Esophagus squamous epithelium (tissue), 5 donors: ENCODE measurements at regions of chr15 and their contacts with region 1.

Region 1: GRCh38 chr15:40857601-40858341 is 13.9 kb downstream of the SPINT1 start:
- DNase-seq: no peak
- H3K4me3 ChIP-seq: no peak overlapping the region
- H3K27ac ChIP-seq: peak overlapping the region; percentile 75 to 86 (median 80)
- H3K4me1 ChIP-seq: peaks cover 22 to 71% (median 24%) of the 10 kb centered on the region in 3 donors
- H3K27me3 ChIP-seq: peaks cover 0 to 10% (median 0%) of the 10 kb centered on the region in 4 donors
- CTCF ChIP-seq: peak; percentile 87 to 99 (median 98)
- POLR2A ChIP-seq: no peak

Region 2: DNA sequence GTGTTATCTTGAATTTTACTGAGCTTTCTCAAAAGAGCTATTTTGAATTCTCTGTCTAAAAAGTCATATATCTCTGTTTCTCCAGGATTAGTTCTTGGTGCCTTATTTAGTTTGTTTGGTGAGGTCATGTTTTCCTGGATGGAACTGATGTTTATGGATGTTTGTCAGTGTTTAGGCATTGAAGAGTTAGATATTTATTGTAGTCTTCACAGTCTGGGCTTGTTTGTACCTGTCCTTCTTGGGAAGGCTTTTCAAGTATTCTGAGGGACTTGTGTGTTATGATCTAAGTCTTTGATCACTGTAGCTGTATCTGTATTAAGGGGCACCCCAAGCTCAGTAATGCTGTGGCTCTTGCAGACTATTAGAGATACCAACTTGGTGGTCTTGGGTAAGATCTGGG is 173.4 kb before region 1 on chr15:
- intact Hi-C with region 1: no loop called
- DNase-seq: no peak
- H3K4me3 ChIP-seq: no peak overlapping the region
- H3K27ac ChIP-seq: no peak overlapping the region
- H3K4me1 ChIP-seq: peaks cover 0 to 6% (median 0%) of the 10 kb centered on the region in 3 donors
- H3K27me3 ChIP-seq: no peaks in the 10 kb centered on the region
- CTCF ChIP-seq: no peak
- POLR2A ChIP-seq: no peak

Region 3: GRCh38 chr15:40731034-40731433 is 126.7 kb before region 1 on chr15:
- intact Hi-C with region 1: no loop called
- DNase-seq: no peak
- H3K4me3 ChIP-seq: no peak overlapping the region
- H3K27ac ChIP-seq: no peak overlapping the region
- H3K4me1 ChIP-seq: no peaks in the 10 kb centered on the region
- H3K27me3 ChIP-seq: no peaks in the 10 kb centered on the region
- CTCF ChIP-seq: no peak
- POLR2A ChIP-seq: no peak

Region 4: GRCh38 chr15:40893733-40894688 is 36.2 kb after region 1 on chr15 and contains the start of gene VPS18:
- intact Hi-C with region 1: loop called (anchors 5 kb)
- DNase-seq: peak; percentile 83
- H3K4me3 ChIP-seq: peak within 1 kb of the TSS; percentile 72 to 85 (median 79)
- H3K27ac ChIP-seq: peak within 1 kb of the TSS; percentile 91 to 96 (median 94)
- H3K4me1 ChIP-seq: peaks cover 19 to 52% (median 25%) of the 10 kb centered on the region in 3 donors
- H3K27me3 ChIP-seq: no peaks in the 10 kb centered on the region
- CTCF ChIP-seq: peak; percentile 94 to 100 (median 99)
- POLR2A ChIP-seq: peak in 3 of 4 donors; percentile 63 to 86 (median 83)
- total RNA-seq, gene VPS18: 17.4 to 25.9 (median 20.7) TPM